Left cardiac atrium (tissue), 4 donors: ENCODE measurements at regions of chr2 and their contacts with region 1.

Region 1: DNA sequence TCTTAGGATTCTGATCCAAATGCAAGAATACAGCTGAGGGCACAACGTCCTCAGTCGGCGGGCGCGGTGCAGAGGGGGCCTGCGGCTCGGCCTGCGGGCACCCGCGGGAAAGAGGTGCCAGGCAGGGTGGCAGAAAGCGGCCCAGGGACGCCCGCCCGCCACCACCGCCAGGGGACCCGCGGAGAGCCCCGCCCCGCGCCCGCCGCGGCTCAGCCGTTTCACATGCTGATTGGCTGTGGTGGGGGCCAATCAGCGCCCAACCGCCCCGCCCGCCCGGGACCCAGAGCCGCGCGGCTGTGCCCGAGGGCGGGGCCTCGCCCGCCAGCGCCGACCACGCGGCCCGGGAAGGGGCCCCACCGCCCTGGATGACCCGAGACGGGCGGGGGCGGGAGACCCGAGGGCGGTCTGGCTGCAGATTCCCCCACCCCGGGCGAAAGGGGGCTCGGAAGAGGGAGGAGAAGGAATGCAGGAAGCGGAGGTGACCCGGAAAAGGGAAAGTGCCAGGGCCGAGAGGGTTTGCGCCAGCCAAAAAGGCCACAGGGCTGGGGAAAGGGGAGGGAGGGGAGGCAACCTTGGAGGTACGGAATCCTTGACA is 8.0 kb downstream of the IRS1 start:
- DNase-seq: peak; percentile 94
- ATAC-seq: peak; percentile 95 to 97

Region 2: GRCh38 chr2:226554701-226555100 is 236.9 kb before region 1 on chr2:
- intact Hi-C with region 1: loop called in 1 of 2 experiments (anchors 10 kb)
- DNase-seq: no peak
- ATAC-seq: no peak

Region 3: DNA sequence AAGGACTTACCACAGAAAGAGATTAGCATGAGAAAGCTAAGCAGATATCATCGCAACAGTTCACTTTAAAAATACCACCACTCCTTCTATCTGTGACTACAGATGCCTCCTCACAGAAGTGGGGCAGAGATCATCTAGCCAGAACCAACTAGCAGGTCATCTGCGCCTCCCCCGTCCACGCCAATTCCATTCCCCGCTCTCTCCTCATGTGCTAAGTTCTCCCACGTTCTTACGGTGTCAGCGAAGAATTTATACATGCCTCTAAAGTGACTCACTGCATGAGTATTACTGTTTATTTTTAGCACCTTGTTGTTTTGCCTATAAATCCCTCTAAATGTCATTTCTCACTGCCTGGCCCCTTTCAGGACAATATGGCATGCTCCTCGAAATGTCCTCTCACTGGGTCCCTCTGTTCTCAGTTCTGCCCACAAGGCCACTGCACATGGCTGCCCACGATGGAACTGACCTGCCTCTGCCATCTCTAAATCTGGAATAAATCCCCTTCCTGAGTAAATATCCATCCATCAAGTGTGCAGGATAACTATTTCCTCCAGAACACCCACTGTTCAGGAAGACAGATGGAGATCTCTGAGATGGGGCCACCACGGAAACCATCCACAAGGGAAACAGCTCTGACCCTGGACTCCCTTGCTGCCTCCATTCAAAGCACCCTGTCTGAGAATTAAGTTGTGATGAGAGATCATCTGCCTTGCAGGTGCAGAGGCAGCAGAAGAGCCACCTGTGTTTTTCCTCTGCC is 129.6 kb before region 1 on chr2:
- intact Hi-C with region 1: loop called in 1 of 2 experiments (anchors 10 kb)
- DNase-seq: peak; percentile 56
- ATAC-seq: peak; percentile 76 to 95

Region 4: GRCh38 chr2:226813148-226813701 is 21.6 kb after region 1 on chr2:
- intact Hi-C with region 1: no loop called
- DNase-seq: no peak
- ATAC-seq: no peak